Ascending aorta (tissue), 2 donors: ENCODE measurements at regions of chr9 and their contacts with region 1.

Region 1: GRCh38 chr9:6008169-6008979 is 7.0 kb downstream of the RANBP6 start:
- DNase-seq: peak; percentile 91 to 98
- H3K4me3 ChIP-seq: peak overlapping the region; percentile 85 to 97
- H3K27ac ChIP-seq: peak overlapping the region; percentile 97
- H3K4me1 ChIP-seq: peaks cover 0 to 17% of the 10 kb centered on the region in 2 donors
- H3K27me3 ChIP-seq: no peaks in the 10 kb centered on the region
- CTCF ChIP-seq: no peak

Region 2: GRCh38 chr9:5628530-5629311 is 379.7 kb before region 1 on chr9 and contains the start of gene RIC1:
- intact Hi-C with region 1: loop called (anchors 2 kb)
- DNase-seq: peak; percentile 77 to 95
- H3K4me3 ChIP-seq: peak within 1 kb of the TSS; percentile 93 to 98
- H3K27ac ChIP-seq: peak within 1 kb of the TSS; percentile 95 to 99
- H3K4me1 ChIP-seq: peaks cover 5 to 43% of the 10 kb centered on the region in 2 donors
- H3K27me3 ChIP-seq: no peaks in the 10 kb centered on the region
- CTCF ChIP-seq: no peak
- total RNA-seq, gene RIC1: 46.7 TPM

Region 3: GRCh38 chr9:6080154-6080716 is 71.9 kb after region 1 on chr9:
- intact Hi-C with region 1: loop called (anchors 1 kb)
- DNase-seq: peak; percentile 75 to 92
- H3K4me3 ChIP-seq: peak overlapping the region; percentile 51 to 66
- H3K27ac ChIP-seq: peak overlapping the region; percentile 69 to 74
- H3K4me1 ChIP-seq: no peaks in the 10 kb centered on the region
- H3K27me3 ChIP-seq: no peaks in the 10 kb centered on the region
- CTCF ChIP-seq: peak in 2 of 3 experiments; percentile 13 to 15

Region 4: DNA sequence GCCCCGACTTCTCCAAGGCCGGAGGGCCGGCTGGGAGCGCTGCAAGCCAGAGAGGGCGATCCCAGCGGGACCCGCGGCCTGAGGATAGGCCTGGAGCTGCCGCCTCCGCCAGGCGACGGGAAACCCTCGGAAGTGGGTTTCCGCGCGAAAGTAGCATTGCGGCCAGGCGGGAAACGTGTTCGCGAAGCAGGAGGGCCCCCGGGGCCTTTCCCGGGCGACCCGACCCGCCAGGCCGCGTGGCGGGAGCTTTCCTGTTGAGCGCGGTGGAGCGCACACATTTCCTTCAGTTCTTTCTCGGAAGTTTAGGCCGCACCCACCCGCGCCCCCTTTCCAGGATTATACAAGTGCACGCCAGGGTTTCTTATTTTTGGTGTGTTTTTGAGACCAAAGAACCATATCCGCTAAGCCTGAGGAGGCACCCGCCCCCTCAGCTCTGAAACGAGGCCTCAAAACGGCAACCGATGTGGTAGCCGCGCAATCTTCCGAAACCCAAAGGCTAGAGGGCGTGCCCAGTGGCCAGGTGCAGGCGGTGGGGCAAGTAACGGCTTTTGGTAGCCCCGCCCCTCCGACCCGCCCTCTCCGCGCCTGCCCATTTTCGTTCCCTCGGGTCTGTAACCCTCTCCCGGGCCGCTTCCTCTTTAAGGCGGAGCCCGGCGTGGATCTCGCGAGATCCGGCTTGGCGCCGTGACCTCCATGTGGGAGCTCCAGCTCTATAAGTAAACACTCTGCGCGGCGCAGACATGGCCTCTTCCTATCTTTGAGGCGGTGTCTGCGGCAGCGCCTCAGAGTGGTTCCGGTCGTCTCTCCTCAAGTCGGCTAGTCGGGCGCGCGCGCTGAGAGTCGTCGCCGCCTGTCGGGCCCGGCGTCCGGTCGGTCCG is 404.4 kb after region 1 on chr9 and contains the start of gene UHRF2:
- intact Hi-C with region 1: loop called (anchors 2 kb)
- DNase-seq: peak; percentile 97 to 99
- H3K4me3 ChIP-seq: peak within 1 kb of the TSS; percentile 97 to 98
- H3K27ac ChIP-seq: peak within 1 kb of the TSS; percentile 86 to 92
- H3K4me1 ChIP-seq: peaks cover 6% of the 10 kb centered on the region in 2 donors
- H3K27me3 ChIP-seq: no peaks in the 10 kb centered on the region
- CTCF ChIP-seq: peak in 1 of 3 experiments; percentile 21
- total RNA-seq, gene UHRF2: 22.8 TPM

Region 5: DNA sequence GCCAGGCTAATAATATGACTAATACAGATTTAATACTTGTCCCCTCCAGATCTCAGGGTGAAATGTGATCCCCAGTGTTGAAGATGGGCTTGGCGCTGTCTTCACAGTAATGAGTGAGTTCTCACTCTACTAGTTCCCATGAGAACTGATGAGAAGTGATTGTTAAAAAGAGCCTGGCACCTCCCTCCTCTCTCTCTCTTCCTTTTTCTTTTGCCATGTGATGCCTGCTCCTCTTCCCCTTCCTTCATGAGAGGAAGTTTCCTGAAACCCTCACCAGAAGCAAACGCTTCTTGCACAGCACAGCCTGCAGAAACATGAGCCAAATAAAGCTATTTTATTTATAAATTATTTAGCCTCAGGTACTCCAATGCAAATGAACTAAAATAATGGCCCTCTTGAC is 582.0 kb after region 1 on chr9:
- intact Hi-C with region 1: no loop called
- DNase-seq: no peak
- H3K4me3 ChIP-seq: no peak overlapping the region
- H3K27ac ChIP-seq: no peak overlapping the region
- H3K4me1 ChIP-seq: no peaks in the 10 kb centered on the region
- H3K27me3 ChIP-seq: no peaks in the 10 kb centered on the region
- CTCF ChIP-seq: no peak

Region 6: DNA sequence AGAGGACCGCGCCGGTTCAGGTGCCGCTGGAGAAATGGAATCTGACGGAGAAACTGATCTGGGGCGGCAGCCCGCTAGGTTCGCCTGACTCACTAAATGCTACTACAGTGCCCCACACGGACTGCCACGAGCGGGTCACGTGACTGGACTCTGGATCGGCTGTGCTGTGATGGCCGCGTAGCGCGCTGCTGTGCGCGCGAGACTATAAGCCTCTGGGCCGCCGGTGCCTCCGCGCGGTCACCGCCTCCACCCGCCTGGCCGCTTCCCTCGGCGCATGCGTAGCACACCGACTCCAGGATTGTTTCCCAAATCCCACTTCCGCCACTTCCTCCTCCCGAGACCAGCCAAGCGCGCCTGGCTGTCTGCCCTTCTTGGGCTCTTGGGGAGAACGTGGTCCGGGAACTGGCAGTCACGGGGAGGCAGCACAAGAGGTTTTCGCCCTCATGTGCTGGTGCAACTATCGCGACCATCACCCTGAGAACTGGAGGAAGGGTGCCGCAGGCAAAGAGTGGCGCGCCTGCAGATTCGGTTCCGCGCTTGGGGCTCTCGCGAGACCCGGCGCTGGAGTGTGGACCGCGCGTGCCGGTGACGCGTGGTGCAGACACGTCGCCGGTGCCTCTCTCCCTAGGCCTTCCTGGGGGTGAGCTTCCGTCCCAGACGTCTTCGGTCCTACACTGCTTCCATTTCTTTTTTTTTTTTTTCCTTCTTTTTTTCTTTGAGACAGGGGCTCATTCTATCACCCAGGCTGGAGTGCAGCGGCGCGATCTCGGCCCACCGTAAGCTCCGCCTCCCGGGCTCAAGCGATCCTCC is 673.0 kb after region 1 on chr9:
- intact Hi-C with region 1: loop called (anchors 5 kb)
- DNase-seq: peak; percentile 90 to 98
- H3K4me3 ChIP-seq: peak overlapping the region; percentile 71 to 72
- H3K27ac ChIP-seq: peak overlapping the region; percentile 95 to 96
- H3K4me1 ChIP-seq: peaks cover 0 to 10% of the 10 kb centered on the region in 2 donors
- H3K27me3 ChIP-seq: no peaks in the 10 kb centered on the region
- CTCF ChIP-seq: peak in 1 of 3 experiments; percentile 6